Vagina (tissue), 2 donors: ENCODE measurements at regions of chr10 and their contacts with region 1.

Region 1: DNA sequence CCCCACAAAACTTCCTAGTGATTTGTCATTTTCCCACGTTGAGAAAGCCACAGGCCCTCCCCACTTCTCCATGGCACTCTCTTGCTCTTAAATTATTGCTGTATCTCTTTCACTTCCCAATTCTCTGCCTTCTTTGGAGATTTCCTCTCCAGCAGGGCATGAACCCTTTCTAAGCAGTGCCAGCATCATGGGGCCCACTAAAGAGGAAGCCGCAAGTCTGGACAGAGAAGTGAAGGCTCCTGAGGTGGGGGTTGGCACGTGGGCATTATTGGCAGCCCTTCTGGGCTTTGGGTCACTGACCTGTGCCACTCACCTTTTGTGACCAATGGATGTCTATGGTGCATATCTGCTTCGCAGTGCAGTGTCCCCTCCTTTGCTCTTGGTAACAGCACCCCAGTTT is 97.7 kb upstream of the TCF7L2 start:
- DNase-seq: no peak
- H3K4me3 ChIP-seq: no peak overlapping the region
- H3K27ac ChIP-seq: no peak overlapping the region
- H3K4me1 ChIP-seq: no peaks in the 10 kb centered on the region
- H3K27me3 ChIP-seq: no peaks in the 10 kb centered on the region
- CTCF ChIP-seq: no peak
- POLR2A ChIP-seq: no peak

Region 2: GRCh38 chr10:112374724-112375541 is 477.4 kb before region 1 on chr10:
- intact Hi-C with region 1: loop called (anchors 5 kb)
- DNase-seq: no peak
- H3K4me3 ChIP-seq: peak overlapping the region in 1 of 2 donors; percentile 39
- H3K27ac ChIP-seq: peak overlapping the region; percentile 71
- H3K4me1 ChIP-seq: peaks cover 11% of the 10 kb centered on the region
- H3K27me3 ChIP-seq: no peaks in the 10 kb centered on the region
- CTCF ChIP-seq: no peak
- POLR2A ChIP-seq: no peak